Activated CD8-positive, alpha-beta memory T cell treated with anti-CD3 and anti-CD28 coated beads, Interleukin-2, amount 10 ng/mL, durations not matched to agents 7 days and 5 days (primary cell): ENCODE measurements at regions of chr18 and their contacts with region 1.

Region 1: GRCh38 chr18:864872-865273 is 39.8 kb upstream of the ADCYAP1 start:
- DNase-seq: peak; percentile 74
- ATAC-seq: peak; percentile 78
- H3K4me3 Mint-ChIP-seq: no peak overlapping the region
- H3K27ac Mint-ChIP-seq: no peak overlapping the region
- H3K4me1 Mint-ChIP-seq: peaks cover 2% of the 10 kb centered on the region
- H3K27me3 Mint-ChIP-seq: peaks cover 48% of the 10 kb centered on the region

Region 2: DNA sequence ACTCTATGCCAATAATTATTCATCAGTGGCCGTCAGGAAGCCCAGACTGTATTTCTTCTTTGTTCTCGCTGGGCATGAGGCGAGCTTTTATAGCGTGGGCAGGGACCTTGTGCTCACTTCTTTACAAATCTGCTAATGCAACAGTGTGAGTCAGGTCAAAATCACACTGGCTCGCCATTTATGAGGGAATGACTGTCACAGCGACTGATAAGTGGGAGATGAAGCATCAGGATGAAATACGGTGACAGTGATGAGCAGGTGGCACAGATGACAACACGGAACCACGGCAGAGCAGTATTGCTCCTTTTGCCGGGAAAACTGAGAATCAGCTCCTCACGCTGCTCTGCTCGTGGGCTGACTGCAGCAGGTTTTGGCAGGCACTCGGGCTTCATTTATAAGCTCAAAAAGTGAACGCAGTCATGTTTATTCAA is 186.9 kb before region 1 on chr18:
- CTCF ChIA-PET with region 1: no interaction called
- DNase-seq: no peak
- ATAC-seq: no peak
- H3K4me3 Mint-ChIP-seq: no peak overlapping the region
- H3K27ac Mint-ChIP-seq: peak overlapping the region; percentile 51
- H3K4me1 Mint-ChIP-seq: peaks cover 32% of the 10 kb centered on the region
- H3K27me3 Mint-ChIP-seq: no peaks in the 10 kb centered on the region

Region 3: GRCh38 chr18:961644-962355 is 96.9 kb after region 1 on chr18:
- CTCF ChIA-PET with region 1: interaction called, 15 read pairs
- DNase-seq: peak; percentile 57
- ATAC-seq: no peak
- H3K4me3 Mint-ChIP-seq: no peak overlapping the region
- H3K27ac Mint-ChIP-seq: no peak overlapping the region
- H3K4me1 Mint-ChIP-seq: no peaks in the 10 kb centered on the region
- H3K27me3 Mint-ChIP-seq: peaks cover 29% of the 10 kb centered on the region